Vagina (tissue), 2 donors: ENCODE measurements at regions of chr6 and their contacts with region 1.

Region 1: DNA sequence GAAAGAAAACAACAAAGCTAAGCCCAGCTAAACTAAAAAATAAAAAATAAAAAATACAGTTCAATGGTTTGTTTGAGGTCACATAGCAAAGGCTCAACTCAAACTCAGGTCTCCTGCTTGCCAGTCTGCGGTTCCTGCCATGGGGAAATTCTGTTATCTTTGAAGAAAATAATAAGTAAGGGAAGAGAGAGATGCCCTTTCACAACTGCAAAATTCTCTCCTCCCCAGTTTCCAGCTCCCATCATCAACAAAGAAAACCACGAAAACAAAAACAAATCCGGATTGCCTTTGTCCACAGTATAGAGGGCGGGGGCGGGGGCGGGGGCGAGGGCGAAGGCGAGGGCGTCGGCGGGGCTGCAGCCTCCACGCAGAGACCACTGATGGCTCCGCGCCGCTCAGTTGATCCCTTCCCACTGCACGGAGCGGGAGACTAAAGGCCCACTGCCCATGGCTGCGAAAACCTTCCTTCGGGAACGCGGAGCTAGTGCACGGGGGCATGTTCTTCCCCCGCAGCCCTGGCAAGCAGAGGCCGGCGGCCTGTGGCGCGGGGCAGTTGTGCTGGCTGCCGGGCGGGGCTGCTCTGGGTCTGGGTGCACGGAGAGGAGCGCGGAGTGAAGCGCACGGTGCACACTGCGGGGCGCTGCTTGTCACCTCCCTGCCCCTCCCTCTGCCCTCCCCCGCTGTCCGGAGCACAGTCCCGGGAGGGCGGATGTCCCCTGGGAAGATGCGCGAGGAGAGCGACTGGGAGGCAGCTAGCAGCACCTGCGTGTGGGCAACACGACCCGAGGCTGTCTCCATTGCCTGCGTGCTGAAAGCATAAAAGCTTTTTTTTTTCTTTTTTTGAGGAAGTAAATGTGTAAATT is 54.1 kb upstream of the TPD52L1 start:
- DNase-seq: no peak
- H3K4me3 ChIP-seq: peak overlapping the region; percentile 50 to 53
- H3K27ac ChIP-seq: no peak overlapping the region
- H3K4me1 ChIP-seq: peaks cover 17% of the 10 kb centered on the region
- H3K27me3 ChIP-seq: no peaks in the 10 kb centered on the region
- CTCF ChIP-seq: no peak
- POLR2A ChIP-seq: no peak

Region 2: GRCh38 chr6:124888581-124889371 is 210.7 kb before region 1 on chr6:
- intact Hi-C with region 1: no loop called
- DNase-seq: no peak
- H3K4me3 ChIP-seq: no peak overlapping the region
- H3K27ac ChIP-seq: no peak overlapping the region
- H3K4me1 ChIP-seq: no peaks in the 10 kb centered on the region
- H3K27me3 ChIP-seq: no peaks in the 10 kb centered on the region
- CTCF ChIP-seq: no peak
- POLR2A ChIP-seq: no peak

Region 3: DNA sequence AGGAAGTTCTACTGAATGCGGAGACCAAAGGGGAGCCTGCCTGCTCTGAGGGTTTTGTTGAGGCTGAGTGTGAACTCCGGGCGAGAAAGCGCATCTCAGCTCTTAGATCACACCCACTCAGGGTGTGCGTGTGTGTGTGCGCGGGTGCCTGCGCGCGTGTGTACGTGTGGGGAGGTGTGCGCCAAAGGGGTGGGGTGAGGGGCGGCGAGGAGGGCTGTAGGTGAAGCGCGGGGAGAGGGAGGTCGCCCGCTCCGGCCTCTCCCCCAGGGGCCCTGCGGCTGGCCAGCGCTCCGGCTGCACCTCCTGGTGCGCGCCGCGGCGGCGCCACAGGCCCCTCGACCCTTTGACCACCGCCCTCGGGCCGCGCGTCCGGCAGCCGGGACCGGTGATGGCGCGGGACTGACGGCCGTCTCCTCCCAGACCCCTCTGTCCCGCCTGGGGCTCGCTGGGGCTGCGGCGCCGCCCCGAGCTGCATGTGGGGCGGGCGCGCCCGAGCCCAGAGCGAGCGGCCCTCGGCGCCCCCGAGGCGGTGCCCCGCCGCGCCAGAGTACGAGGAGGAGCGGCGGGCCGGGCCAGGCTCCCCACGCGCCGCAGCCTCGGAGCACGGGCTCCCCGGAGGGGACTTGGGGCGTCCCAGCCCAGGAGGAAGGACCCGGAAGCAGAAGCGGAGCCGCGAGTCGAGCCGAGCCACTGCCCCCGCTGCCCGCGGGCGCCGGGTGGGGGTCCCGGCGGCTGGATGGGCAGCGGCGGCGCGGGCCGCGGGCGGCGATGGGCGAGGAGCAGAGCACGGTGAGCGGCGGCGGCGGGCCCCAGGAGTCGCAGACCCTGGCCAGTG is 137.4 kb before region 1 on chr6 and contains the start of gene RNF217:
- intact Hi-C with region 1: loop called (anchors 10 kb)
- DNase-seq: no peak
- H3K4me3 ChIP-seq: peak within 1 kb of the TSS; percentile 82 to 83
- H3K27ac ChIP-seq: peak within 1 kb of the TSS; percentile 97
- H3K4me1 ChIP-seq: peaks cover 44% of the 10 kb centered on the region
- H3K27me3 ChIP-seq: no peaks in the 10 kb centered on the region
- CTCF ChIP-seq: no peak
- POLR2A ChIP-seq: peak in 1 of 2 donors; percentile 18
- total RNA-seq, gene RNF217: 26.0 TPM

Region 4: DNA sequence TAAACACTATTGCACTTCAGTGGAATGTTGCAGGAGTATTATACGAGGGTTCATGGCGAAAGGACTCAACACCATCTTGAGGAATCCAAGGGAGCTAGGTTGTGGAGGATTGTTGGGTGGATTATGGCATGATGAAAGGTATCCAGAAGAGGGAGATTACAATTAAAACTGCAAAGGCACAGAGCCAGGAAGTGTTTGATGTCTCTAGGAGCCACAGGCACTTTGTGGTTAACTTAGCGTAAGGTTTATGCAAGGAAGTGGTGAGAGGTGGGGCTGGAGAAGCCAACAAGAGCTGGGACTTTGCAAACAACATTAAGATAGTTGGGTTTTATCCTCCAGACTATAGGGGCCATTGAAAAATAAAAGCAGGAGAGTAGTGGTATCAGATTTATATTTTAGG is 32.5 kb before region 1 on chr6:
- intact Hi-C with region 1: no loop called
- DNase-seq: no peak
- H3K4me3 ChIP-seq: no peak overlapping the region
- H3K27ac ChIP-seq: no peak overlapping the region
- H3K4me1 ChIP-seq: no peaks in the 10 kb centered on the region
- H3K27me3 ChIP-seq: no peaks in the 10 kb centered on the region
- CTCF ChIP-seq: no peak
- POLR2A ChIP-seq: no peak

Region 5: DNA sequence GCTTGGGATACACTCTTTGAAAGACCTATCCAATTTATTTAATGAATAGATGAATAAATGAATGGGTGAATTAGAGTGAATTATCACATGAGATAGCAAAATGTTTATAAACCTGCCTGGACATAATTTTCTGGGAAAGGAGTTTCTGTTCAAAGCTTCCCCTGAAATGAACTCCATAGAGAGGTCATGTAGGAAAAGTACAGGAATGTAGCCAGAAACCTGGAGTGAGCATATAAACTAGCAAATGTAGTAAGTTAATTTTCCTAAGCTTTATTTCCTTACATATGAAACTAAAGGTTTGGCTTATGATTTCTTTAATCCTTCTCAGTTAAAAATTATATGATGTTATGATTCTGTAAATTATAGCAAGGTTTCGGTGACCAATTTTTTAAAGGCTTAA is 1638.7 kb after region 1 on chr6:
- intact Hi-C with region 1: no loop called
- DNase-seq: no peak
- H3K4me3 ChIP-seq: no peak overlapping the region
- H3K27ac ChIP-seq: no peak overlapping the region
- H3K4me1 ChIP-seq: no peaks in the 10 kb centered on the region
- H3K27me3 ChIP-seq: no peaks in the 10 kb centered on the region
- CTCF ChIP-seq: no peak
- POLR2A ChIP-seq: no peak

Region 6: DNA sequence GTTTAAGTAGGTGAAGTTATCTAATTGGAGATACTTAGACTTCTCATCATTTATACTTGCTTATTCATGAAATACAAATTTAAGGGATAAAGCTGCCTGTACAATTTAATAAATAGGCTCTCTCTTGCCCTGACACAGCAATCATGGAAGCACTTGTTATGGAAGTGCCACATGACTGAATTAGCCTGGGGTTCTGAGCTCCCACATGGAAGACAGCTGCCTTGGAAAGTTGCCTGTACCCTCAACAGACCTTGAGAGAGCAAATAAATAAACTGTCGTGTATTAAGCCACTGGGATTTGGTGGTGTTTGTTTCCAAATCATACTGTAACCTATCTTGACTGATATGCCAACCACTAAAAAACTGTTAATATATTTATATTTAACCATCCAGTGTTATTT is 1932.1 kb after region 1 on chr6:
- intact Hi-C with region 1: no loop called
- DNase-seq: no peak
- H3K4me3 ChIP-seq: no peak overlapping the region
- H3K27ac ChIP-seq: no peak overlapping the region
- H3K4me1 ChIP-seq: no peaks in the 10 kb centered on the region
- H3K27me3 ChIP-seq: no peaks in the 10 kb centered on the region
- CTCF ChIP-seq: no peak
- POLR2A ChIP-seq: no peak